Spleen (tissue), 13 donors: ENCODE measurements at regions of chrX and their contacts with region 1.

Region 1: DNA sequence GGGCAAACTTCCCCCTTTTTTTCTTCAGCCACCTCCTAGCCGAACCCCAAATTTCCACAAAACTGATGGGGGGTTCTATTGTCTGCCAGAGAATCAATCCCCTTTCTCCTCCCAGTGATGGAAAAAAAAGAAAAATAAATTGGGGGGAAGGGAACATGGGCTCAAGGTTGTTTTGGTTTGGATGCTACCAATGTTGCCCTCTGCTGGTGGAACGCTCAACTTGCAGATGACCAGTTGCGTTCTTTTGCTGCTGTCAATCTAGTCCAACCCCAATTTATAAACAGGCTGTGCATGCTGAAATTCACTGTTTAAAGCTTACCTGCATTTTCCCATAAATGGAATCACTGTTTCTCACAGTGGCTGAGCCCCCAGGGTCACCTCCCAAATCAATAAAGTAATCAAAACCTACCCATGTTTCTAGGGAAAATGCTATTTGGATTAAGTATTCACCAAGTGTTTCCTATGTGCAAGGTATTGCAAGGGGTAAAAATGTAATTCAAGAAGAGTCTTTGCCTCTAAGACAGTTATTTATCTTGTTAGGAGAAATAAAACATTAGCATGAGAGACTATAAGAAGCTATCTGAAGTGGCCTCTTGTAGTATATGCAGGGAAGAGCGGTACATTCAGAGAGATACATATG is 116.7 kb upstream of the TMEM164 start:
- DNase-seq: no peak
- H3K4me3 ChIP-seq: no peak overlapping the region
- H3K27ac ChIP-seq: peak overlapping the region in 2 of 8 donors; percentile 10 to 84
- H3K4me1 ChIP-seq: peaks cover 0 to 39% (median 11%) of the 10 kb centered on the region in 6 donors
- H3K27me3 ChIP-seq: no peaks in the 10 kb centered on the region
- CTCF ChIP-seq: peak; percentile 23 to 75 (median 60)
- POLR2A ChIP-seq: no peak

Region 2: GRCh38 chrX:109498434-109498833 is 387.8 kb before region 1 on chrX:
- intact Hi-C with region 1: loop called (anchors 10 kb)
- DNase-seq: no peak
- H3K4me3 ChIP-seq: no peak overlapping the region
- H3K27ac ChIP-seq: no peak overlapping the region
- H3K4me1 ChIP-seq: no peaks in the 10 kb centered on the region
- H3K27me3 ChIP-seq: peaks cover 0 to 6% (median 0%) of the 10 kb centered on the region in 7 donors
- CTCF ChIP-seq: no peak
- POLR2A ChIP-seq: no peak

Region 3: GRCh38 chrX:109656774-109657173 is 229.5 kb before region 1 on chrX:
- intact Hi-C with region 1: no loop called
- DNase-seq: no peak
- H3K4me3 ChIP-seq: no peak overlapping the region
- H3K27ac ChIP-seq: no peak overlapping the region
- H3K4me1 ChIP-seq: no peaks in the 10 kb centered on the region
- H3K27me3 ChIP-seq: peaks cover 0 to 4% (median 0%) of the 10 kb centered on the region in 7 donors
- CTCF ChIP-seq: no peak
- POLR2A ChIP-seq: no peak